ENCODE measurements at regions of chr9 and their contacts with region 1.

Region 1: DNA sequence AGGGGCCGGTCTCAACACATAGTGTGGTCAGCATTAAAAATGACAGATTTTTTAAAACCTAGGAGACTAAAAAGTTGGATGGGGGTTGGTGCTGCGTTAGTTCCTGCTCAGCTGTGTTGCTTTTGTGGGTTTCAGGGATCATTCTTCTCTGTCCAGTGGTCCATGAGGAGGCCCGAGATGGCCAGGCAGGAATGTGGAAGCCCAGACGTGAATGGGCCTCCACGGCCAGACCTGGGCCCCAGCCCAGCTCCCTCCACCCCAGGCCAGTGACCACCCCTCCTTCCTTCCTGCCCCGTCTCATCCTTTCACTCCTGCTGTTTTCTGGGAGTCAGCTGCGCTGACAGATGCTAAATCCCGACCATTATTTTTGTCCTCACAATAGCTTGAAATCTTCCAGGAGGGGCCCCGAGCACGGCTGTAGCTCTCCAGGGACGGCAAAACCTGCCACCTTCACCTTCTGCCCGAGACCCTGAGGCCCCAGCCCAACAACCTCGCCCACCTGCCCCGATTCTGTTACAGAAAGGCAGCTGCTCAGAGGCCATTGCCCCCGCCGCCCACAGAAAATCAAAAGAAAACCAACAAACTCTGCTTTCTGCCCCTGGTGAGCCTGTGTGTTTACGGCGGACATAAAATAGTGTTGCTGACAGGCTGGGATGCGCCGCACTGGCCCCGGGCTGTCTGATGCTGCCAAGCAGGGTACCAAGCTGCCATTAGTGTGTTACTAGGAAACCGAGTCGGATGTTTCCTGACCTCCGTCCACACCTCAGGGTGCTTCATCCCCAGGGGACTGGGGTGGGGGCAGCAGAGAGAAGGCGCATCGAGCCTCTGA is 83.7 kb upstream of the SARDH start:
- DNase-seq: no peak
- H3K4me3 ChIP-seq: no peak overlapping the region
- H3K27ac ChIP-seq: no peak overlapping the region
- H3K4me1 ChIP-seq: no peaks in the 10 kb centered on the region
- H3K27me3 ChIP-seq: no peaks in the 10 kb centered on the region
- CTCF ChIP-seq: no peak

Region 2: GRCh38 chr9:133837627-133838597 is 16.1 kb after region 1 on chr9:
- CTCF ChIA-PET with region 1: no interaction called
- POLR2A ChIA-PET with region 1: interaction called, 10 read pairs
- intact Hi-C with region 1: no loop called
- DNase-seq: no peak
- H3K4me3 ChIP-seq: no peak overlapping the region
- H3K27ac ChIP-seq: no peak overlapping the region
- H3K4me1 ChIP-seq: no peaks in the 10 kb centered on the region
- H3K27me3 ChIP-seq: no peaks in the 10 kb centered on the region
- CTCF ChIP-seq: no peak